ENCODE measurements at regions of chr6 and their contacts with region 1.

Region 1: DNA sequence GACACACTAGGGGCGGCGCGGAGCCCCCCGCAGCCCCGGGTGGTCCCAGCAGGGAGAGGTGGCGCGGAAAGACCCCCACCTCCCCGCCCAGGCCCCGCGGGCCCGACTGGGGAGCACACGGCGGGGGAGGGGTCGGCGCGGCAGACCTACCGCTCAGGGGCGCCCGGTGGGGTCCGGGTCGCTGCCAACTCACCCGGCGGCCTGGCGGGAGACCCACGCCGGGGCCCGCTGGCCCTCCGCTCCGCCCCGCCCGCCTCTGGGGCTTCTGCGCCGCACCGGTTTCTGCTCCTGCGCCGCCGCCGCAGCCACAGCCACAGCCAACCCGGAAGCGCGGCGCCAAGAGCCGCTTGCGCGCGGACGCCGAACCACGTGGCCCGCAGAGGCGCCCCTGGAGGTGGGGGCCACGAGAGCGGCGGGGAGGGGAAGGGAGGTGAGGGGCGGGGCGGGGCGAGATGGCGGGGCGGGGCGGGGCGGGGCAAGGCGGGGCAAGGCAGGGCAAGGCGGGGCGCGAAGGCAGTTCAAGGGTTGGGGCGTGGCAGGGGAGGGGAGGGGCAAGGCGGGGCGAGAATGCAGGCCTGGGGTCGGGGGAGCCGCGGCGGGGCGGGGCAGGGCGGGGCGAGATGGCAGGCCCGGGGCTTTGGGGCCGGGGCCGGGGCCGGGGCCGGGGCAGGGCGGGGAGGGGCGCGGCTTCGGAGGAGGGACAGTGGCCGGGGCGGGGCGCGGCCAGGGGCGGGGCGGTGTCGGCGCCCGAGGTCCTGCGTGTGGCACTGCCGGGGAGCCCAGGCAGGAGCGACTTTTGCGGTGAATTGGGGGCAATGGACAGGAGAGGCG is at the start of gene ZBTB24:
- DNase-seq: peak; percentile 97
- H3K4me3 Mint-ChIP-seq: peak within 1 kb of the TSS; percentile 97
- H3K27ac Mint-ChIP-seq: peak within 1 kb of the TSS; percentile 93
- H3K4me1 Mint-ChIP-seq: peaks cover 41% of the 10 kb centered on the region
- H3K27me3 Mint-ChIP-seq: peaks cover 3% of the 10 kb centered on the region
- total RNA-seq, gene ZBTB24: 18.9 and 19.6 TPM in 2 replicates

Region 2: DNA sequence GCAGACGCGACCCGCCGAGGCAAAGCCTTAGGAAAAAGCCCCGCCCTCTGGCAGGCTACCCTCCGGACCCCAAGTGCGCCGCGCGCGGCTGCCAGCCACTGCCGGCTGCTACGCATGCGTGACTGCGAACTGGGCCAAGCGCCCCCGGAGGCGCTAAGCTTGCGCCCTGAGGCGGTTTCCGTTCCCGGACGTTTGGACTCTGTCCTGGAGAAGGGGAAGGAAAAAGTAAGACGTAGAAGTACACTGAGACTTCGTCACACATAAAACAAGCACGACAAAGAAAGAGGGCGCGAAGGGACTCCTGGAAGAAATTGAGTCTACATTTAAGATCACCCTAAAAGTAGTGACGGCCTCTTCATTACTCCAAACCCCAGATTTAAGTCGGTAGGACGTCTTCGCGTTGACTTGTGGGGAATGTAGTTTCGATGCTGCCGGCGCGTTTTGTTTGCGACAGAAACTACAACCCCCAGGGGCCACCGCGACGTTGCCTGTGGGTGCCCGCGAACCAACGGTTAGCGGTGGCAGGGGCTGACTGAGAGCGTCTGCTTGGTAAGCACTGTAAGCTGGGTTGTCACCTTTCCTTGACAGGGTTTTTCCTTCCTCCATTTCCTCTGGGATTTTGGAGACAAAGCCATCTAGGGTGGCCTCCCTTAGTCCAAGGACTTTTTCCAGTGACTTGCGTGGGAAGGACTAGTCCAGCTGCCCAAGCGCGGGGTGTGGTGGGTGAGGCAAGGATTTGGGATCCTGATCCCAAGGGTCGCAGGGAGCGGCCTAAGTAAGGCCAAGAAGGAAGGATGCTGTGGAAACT is 387.9 kb before region 1 on chr6 and contains the start of gene CEP57L1:
- intact Hi-C with region 1: loop called (anchors 1 kb)
- DNase-seq: peak; percentile 98
- H3K4me3 Mint-ChIP-seq: peak within 1 kb of the TSS; percentile 90
- H3K27ac Mint-ChIP-seq: peak within 1 kb of the TSS; percentile 100
- H3K4me1 Mint-ChIP-seq: peaks cover 53% of the 10 kb centered on the region
- H3K27me3 Mint-ChIP-seq: no peaks in the 10 kb centered on the region
- total RNA-seq, gene CEP57L1: 14.2 and 15.3 TPM in 2 replicates

Region 3: GRCh38 chr6:109440331-109441068 is 42.6 kb before region 1 on chr6 and contains the starts of genes PPIL6 and SMPD2:
- intact Hi-C with region 1: loop called (anchors 1 kb)
- DNase-seq: peak; percentile 95
- H3K4me3 Mint-ChIP-seq: peak within 1 kb of the TSS; percentile 97
- H3K27ac Mint-ChIP-seq: peak within 1 kb of the TSS; percentile 96
- H3K4me1 Mint-ChIP-seq: peaks cover 27% of the 10 kb centered on the region
- H3K27me3 Mint-ChIP-seq: peaks cover 2% of the 10 kb centered on the region
- total RNA-seq, gene PPIL6: not detected in 2 replicates
- total RNA-seq, gene SMPD2: 18.2 and 20.5 TPM in 2 replicates

Region 4: DNA sequence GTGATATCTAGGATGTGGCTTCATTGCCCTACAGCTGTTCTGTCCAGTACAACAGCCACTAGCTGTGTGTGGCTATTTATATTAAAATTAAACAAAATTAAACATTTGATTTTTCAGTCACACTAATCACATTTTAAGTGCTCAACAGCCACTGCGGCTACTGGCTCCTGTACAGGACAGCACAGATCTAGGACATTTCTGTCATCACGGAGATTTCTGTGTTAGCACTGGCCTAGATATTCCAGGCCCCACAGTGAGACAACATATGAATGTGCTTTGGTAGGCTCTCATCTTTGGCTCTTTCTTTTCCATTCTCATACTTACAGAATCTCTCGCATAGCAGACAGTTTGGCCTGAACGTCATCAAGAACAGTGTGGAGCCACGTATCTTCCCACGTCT is 48.3 kb after region 1 on chr6:
- intact Hi-C with region 1: no loop called
- DNase-seq: no peak
- H3K4me3 Mint-ChIP-seq: no peak overlapping the region
- H3K27ac Mint-ChIP-seq: no peak overlapping the region
- H3K4me1 Mint-ChIP-seq: peaks cover 4% of the 10 kb centered on the region
- H3K27me3 Mint-ChIP-seq: peaks cover 9% of the 10 kb centered on the region

Region 5: DNA sequence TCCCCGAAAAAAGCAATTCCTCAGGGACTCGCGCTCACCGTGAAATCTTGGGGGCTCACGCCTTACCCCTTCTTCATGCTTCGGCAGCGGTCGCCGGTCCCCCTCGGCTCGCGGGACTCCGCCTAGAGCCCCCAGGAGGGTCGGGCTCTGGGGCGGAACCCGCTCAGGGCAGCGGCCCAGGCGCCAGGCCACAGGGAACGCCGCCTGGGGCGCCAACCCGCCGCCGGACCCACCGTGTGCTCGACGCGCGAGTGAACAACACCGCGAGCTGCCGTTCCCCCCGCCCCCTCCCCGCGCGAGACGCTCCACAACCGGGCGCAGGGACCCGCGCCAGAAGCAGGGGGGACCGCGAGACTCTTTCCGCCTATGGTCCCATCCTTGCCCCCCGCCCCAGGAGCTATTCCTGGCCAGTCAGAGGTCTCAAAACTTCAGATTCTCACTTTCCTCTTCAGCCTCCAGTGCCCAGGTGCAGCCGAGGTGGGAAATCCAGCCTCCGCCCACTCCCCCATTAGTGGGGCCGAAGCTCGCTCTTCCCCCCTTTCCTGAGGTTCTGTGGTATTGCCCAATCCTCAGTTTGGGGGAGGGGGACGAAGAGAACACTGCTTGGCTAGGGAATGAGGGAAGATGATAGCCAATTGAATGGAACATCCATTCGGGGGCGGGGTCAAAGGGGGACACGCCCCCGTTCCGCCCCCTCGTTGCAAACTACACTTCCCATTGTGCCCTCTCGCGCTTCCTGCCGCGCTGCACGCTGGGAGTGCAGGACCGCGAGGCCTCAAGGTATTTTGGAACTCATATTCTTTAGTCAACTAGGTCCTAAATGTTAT is 696.5 kb after region 1 on chr6 and contains the start of gene WASF1:
- intact Hi-C with region 1: loop called (anchors 10 kb)
- DNase-seq: peak; percentile 97
- H3K4me3 Mint-ChIP-seq: peak within 1 kb of the TSS; percentile 81
- H3K27ac Mint-ChIP-seq: peak within 1 kb of the TSS; percentile 60
- H3K4me1 Mint-ChIP-seq: peaks cover 5% of the 10 kb centered on the region
- H3K27me3 Mint-ChIP-seq: peaks cover 19% of the 10 kb centered on the region
- total RNA-seq, gene WASF1: 1.2 and 2.2 TPM in 2 replicates

Measured in activated CD4-positive, alpha-beta T cell treated with anti-CD3 and anti-CD28 coated beads, Interleukin-2, amount 10 ng/mL, durations not matched to agents 24 days and 14 days (primary cell).